Motor neuron (in vitro differentiated cells): ENCODE measurements at regions of chr4 and their contacts with region 1.

Region 1: DNA sequence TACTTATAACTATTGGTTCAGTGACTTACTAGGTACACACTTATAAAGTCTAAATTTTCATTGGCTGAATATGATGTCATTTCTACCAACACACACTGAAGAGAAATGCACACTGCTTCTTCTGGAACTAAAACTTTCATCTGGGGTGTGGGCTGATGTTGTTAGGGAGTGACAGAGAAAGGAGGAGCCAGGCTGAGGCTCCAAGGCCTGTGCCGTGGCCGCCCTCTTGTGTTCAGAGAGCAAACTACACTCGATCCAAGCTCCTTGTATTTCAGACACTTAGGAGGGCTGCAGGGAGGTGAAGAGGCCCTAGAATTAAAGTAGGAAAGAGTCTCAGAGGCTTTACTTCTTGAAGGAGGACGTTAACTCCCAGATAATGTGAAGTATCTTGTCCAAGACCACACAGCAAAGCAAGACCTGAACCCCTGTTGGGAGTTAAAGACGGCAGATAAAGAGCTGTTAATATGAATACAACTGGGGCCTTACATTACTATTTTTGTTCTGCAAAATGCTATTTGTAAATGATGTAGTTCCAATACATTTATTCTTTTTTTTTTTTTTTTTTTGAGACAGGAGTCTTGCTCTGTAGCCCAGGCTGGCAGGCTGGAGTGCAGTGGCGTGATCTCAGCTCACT is 137.5 kb downstream of the AFAP1 start:
- ATAC-seq: peak; percentile 55 to 91 (median 78)
- H3K4me3 ChIP-seq: no peak overlapping the region
- H3K27ac ChIP-seq: no peak overlapping the region
- H3K4me1 ChIP-seq: peaks cover 18 to 22% of the 10 kb centered on the region in 2 donors

Region 2: DNA sequence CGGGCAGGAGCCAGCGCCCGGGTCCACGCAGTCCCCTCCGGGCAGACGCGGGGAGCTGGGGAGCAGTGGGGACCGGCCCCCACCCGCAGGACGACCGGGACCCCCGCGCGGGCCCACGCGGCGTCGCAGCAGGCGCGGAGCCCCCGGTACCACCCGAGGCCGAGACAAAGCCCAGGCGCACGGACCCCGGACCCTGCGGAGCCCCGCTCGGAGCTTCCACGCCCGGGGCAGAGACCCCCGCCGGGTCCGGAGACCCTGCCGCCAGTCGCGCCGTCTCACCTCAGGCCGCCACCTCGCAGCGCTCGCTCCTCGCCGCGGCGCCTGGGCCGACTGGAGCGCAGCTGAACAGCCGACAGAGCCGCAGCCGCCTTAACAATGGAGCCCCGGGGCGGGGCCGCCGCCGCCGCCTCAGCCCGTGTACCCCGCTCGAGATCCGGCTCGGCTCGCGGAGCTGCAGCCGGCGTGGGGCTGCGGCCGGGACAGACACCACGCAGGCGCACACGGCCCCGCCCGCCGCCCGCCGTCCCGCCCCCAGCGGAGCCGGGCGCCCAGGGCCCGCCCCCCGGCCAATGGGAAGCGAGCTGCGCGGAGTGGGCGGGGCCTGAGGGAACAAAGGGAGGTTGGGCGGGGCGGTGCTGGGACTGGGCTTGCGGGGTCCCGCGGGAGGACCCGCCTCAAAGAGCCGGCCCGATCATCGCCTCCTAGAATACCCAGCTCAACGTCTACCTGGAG is 137.3 kb after region 1 on chr4 and contains the start of gene AFAP1:
- in situ Hi-C with region 1: loop called in 1 of 9 experiments (anchors 25 kb)
- ATAC-seq: peak; percentile 79 to 93 (median 90)
- H3K4me3 ChIP-seq: peak within 1 kb of the TSS; percentile 59 to 89 (median 78)
- H3K27ac ChIP-seq: peak within 1 kb of the TSS; percentile 84 to 92
- H3K4me1 ChIP-seq: peaks cover 20 to 22% of the 10 kb centered on the region in 2 donors
- total RNA-seq, gene AFAP1: 25.1 to 209 (median 41.4) TPM

Region 3: GRCh38 chr4:7987148-7987989 is 185.2 kb after region 1 on chr4:
- in situ Hi-C with region 1: loop called in 5 of 9 experiments (anchors 10 to 25 kb)
- ATAC-seq: peak; percentile 47 to 67 (median 54)
- H3K4me3 ChIP-seq: no peak overlapping the region
- H3K27ac ChIP-seq: no peak overlapping the region
- H3K4me1 ChIP-seq: peaks cover 0 to 7% of the 10 kb centered on the region in 2 donors